Naive thymus-derived CD4-positive, alpha-beta T cell (primary cell): ENCODE measurements at regions of chr2 and their contacts with region 1.

Region 1: GRCh38 chr2:218395797-218396687 is 3.6 kb upstream of the CTDSP1 start:
- DNase-seq: peak; percentile 91 to 98 (median 96)
- ATAC-seq: peak; percentile 83
- H3K4me3 ChIP-seq: peak overlapping the region; percentile 71
- H3K4me3 Mint-ChIP-seq: peak overlapping the region; percentile 85 to 99 (median 94)
- H3K27ac ChIP-seq: peak overlapping the region; percentile 86
- H3K27ac Mint-ChIP-seq: peak overlapping the region; percentile 96 to 100 (median 97)
- H3K4me1 ChIP-seq: peaks cover 29 to 31% of the 10 kb centered on the region in 2 donors
- H3K4me1 Mint-ChIP-seq: peaks cover 16 to 41% (median 39%) of the 10 kb centered on the region in 7 donors
- H3K27me3 ChIP-seq: no peaks in the 10 kb centered on the region
- H3K27me3 Mint-ChIP-seq: no peaks in the 10 kb centered on the region

Region 2: GRCh38 chr2:218186355-218186766 is 209.7 kb before region 1 on chr2:
- CTCF ChIA-PET with region 1: no interaction called
- POLR2A ChIA-PET with region 1: no interaction called
- intact Hi-C with region 1: loop called in 1 of 2 experiments (anchors 2 kb)
- DNase-seq: peak; percentile 29 to 79 (median 70)
- ATAC-seq: peak; percentile 97
- H3K4me3 ChIP-seq: no peak overlapping the region
- H3K4me3 Mint-ChIP-seq: no peak overlapping the region
- H3K27ac ChIP-seq: no peak overlapping the region
- H3K27ac Mint-ChIP-seq: peak overlapping the region in 1 of 9 donors; percentile 3
- H3K4me1 ChIP-seq: no peaks in the 10 kb centered on the region
- H3K4me1 Mint-ChIP-seq: peaks cover 0 to 14% (median 8%) of the 10 kb centered on the region in 7 donors
- H3K27me3 ChIP-seq: no peaks in the 10 kb centered on the region
- H3K27me3 Mint-ChIP-seq: peaks cover 0 to 24% (median 0%) of the 10 kb centered on the region in 5 donors

Region 3: DNA sequence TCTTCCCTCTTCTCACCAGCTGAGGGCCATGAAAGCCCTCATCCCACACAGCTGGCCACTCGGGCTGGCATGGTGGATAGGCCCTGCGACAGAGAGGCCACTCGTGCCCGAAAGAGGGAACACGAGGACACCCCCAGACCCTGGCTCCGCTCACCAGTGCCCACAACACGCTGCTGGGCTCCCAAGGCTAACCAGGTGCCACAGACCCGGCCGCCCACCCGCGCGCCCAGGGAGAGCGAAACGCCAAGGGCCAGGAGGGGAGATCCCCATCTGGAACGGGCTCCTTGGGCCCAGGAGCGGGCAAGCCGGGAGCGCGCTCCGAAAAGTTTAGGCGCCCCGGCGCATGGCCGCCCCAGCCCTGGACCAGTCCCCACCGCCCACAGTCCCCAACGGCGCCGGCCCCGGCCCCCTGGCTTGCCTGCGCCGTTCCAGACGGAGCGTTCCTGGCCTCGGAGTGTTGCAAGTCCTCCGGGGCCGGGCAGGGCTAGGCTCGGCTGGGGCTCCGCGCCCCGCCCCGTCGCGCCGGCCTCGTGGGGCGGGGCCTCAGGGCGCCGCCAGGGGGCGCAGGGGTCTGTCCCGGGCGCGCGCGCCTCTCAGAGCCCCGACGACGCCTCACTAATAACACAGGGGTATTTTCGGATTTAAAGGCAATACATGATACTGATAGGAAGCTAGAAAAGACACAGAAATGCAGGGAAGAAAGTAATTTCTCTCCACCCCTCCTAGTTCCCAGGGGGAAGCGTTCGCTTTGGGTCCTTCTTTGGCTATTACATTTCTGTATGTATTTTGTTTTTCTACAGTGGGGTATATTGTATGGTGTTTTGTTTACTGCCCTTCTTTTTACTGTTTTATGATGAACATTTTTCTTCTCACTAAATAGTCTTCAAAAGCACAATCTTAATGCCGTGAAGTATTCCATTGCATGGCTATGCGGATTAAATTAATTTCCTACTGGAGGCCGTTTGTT is 103.7 kb before region 1 on chr2 and contains the start of gene TMBIM1:
- CTCF ChIA-PET with region 1: interaction called, 17 read pairs
- POLR2A ChIA-PET with region 1: interaction called, 34 read pairs
- intact Hi-C with region 1: loop called (anchors 1 kb)
- DNase-seq: peak; percentile 72 to 90 (median 83)
- ATAC-seq: peak; percentile 96
- H3K4me3 ChIP-seq: peak within 1 kb of the TSS; percentile 53
- H3K4me3 Mint-ChIP-seq: peak within 1 kb of the TSS; percentile 82 to 96 (median 92)
- H3K27ac ChIP-seq: peak within 1 kb of the TSS; percentile 93
- H3K27ac Mint-ChIP-seq: peak within 1 kb of the TSS; percentile 88 to 99 (median 98)
- H3K4me1 ChIP-seq: peaks cover 42 to 47% of the 10 kb centered on the region in 2 donors
- H3K4me1 Mint-ChIP-seq: peaks cover 32 to 61% (median 53%) of the 10 kb centered on the region in 7 donors
- H3K27me3 ChIP-seq: no peaks in the 10 kb centered on the region
- H3K27me3 Mint-ChIP-seq: peaks cover 0 to 2% (median 0%) of the 10 kb centered on the region in 5 donors
- total RNA-seq, gene TMBIM1: 51.7 to 112 (median 83.8) TPM

Region 4: GRCh38 chr2:218367415-218368153 is 28.5 kb before region 1 on chr2:
- CTCF ChIA-PET with region 1: interaction called, 4 read pairs
- POLR2A ChIA-PET with region 1: interaction called, 14 read pairs
- intact Hi-C with region 1: loop called (anchors 1 to 2 kb)
- DNase-seq: peak; percentile 55 to 79 (median 62)
- ATAC-seq: peak; percentile 89
- H3K4me3 ChIP-seq: peak overlapping the region; percentile 74
- H3K4me3 Mint-ChIP-seq: peak overlapping the region; percentile 75 to 87 (median 82)
- H3K27ac ChIP-seq: peak overlapping the region; percentile 72
- H3K27ac Mint-ChIP-seq: peak overlapping the region; percentile 14 to 94 (median 89)
- H3K4me1 ChIP-seq: peaks cover 0 to 17% of the 10 kb centered on the region in 2 donors
- H3K4me1 Mint-ChIP-seq: peaks cover 11 to 51% (median 31%) of the 10 kb centered on the region in 7 donors
- H3K27me3 ChIP-seq: no peaks in the 10 kb centered on the region
- H3K27me3 Mint-ChIP-seq: peaks cover 0 to 33% (median 0%) of the 10 kb centered on the region in 5 donors

Region 5: GRCh38 chr2:218648088-218648786 is 252.2 kb after region 1 on chr2:
- CTCF ChIA-PET with region 1: no interaction called
- POLR2A ChIA-PET with region 1: no interaction called
- intact Hi-C with region 1: loop called (anchors 2 kb)
- DNase-seq: peak; percentile 15 to 55 (median 46)
- ATAC-seq: peak; percentile 91
- H3K4me3 ChIP-seq: no peak overlapping the region
- H3K4me3 Mint-ChIP-seq: peak overlapping the region in 1 of 10 donors; percentile 7
- H3K27ac ChIP-seq: no peak overlapping the region
- H3K27ac Mint-ChIP-seq: peak overlapping the region in 1 of 9 donors; percentile 35
- H3K4me1 ChIP-seq: peaks cover 0 to 7% of the 10 kb centered on the region in 2 donors
- H3K4me1 Mint-ChIP-seq: peaks cover 0 to 14% (median 12%) of the 10 kb centered on the region in 7 donors
- H3K27me3 ChIP-seq: no peaks in the 10 kb centered on the region
- H3K27me3 Mint-ChIP-seq: no peaks in the 10 kb centered on the region

Region 6: DNA sequence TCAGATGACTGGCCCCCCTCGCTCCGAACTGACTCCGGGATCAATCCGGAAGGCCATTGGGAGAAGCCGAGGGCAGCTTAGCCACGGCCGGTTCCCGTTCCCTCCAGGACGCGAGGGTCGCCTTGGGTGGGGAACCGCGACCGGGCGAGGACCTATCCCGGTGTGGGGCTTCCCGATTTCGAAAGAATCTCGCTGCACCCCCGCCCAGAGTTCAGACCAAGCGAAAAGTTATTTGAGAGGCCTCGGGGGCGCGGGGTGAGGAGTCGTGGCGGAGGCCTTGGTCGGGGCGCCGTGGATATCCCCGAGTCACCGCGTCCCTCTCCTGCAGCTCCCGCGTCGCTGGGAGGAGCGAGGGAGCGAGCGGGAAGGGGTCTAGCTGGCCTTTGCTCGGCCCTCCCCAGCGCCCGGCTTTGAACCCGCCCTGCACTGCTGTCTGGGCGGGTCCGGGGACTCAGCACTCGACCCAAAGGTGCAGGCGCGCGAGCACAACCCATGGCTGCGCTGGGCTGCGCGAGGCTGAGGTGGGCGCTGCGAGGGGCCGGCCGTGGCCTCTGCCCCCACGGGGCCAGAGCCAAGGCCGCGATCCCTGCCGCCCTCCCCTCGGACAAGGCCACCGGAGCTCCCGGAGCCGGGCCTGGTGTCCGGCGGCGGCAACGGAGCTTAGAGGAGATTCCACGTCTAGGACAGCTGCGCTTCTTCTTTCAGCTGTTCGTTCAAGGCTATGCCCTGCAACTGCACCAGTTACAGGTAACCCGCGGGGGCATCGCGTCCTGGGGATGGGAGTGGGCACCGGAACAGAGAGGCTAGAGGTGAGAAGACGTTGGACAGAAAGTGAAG is 385.9 kb after region 1 on chr2 and contains the start of gene CYP27A1:
- CTCF ChIA-PET with region 1: no interaction called
- POLR2A ChIA-PET with region 1: no interaction called
- intact Hi-C with region 1: no loop called
- DNase-seq: peak in 1 of 9 donors; percentile 23
- ATAC-seq: peak; percentile 29
- H3K4me3 ChIP-seq: no peak within 1 kb of the TSS
- H3K4me3 Mint-ChIP-seq: peak within 1 kb of the TSS in 6 of 10 donors; percentile 22 to 52 (median 27)
- H3K27ac ChIP-seq: no peak within 1 kb of the TSS
- H3K27ac Mint-ChIP-seq: no peak within 1 kb of the TSS
- H3K4me1 ChIP-seq: peaks cover 0 to 3% of the 10 kb centered on the region in 2 donors
- H3K4me1 Mint-ChIP-seq: peaks cover 0 to 14% (median 4%) of the 10 kb centered on the region in 7 donors
- H3K27me3 ChIP-seq: peaks cover 0 to 3% of the 10 kb centered on the region in 2 donors
- H3K27me3 Mint-ChIP-seq: peaks cover 53 to 73% (median 63%) of the 10 kb centered on the region in 5 donors
- total RNA-seq, gene CYP27A1: 0.19 to 10.6 (median 3.9) TPM

Region 7: GRCh38 chr2:218892693-218893348 is 496.8 kb after region 1 on chr2:
- CTCF ChIA-PET with region 1: no interaction called
- POLR2A ChIA-PET with region 1: no interaction called
- intact Hi-C with region 1: loop called (anchors 2 kb)
- DNase-seq: peak; percentile 82 to 93 (median 91)
- ATAC-seq: peak; percentile 78
- H3K4me3 ChIP-seq: peak overlapping the region; percentile 48
- H3K4me3 Mint-ChIP-seq: peak overlapping the region; percentile 58 to 85 (median 75)
- H3K27ac ChIP-seq: peak overlapping the region; percentile 89
- H3K27ac Mint-ChIP-seq: peak overlapping the region; percentile 59 to 96 (median 89)
- H3K4me1 ChIP-seq: peaks cover 53 to 54% of the 10 kb centered on the region in 2 donors
- H3K4me1 Mint-ChIP-seq: peaks cover 38 to 56% (median 52%) of the 10 kb centered on the region in 7 donors
- H3K27me3 ChIP-seq: no peaks in the 10 kb centered on the region
- H3K27me3 Mint-ChIP-seq: peaks cover 0 to 76% (median 0%) of the 10 kb centered on the region in 5 donors

Region 8: DNA sequence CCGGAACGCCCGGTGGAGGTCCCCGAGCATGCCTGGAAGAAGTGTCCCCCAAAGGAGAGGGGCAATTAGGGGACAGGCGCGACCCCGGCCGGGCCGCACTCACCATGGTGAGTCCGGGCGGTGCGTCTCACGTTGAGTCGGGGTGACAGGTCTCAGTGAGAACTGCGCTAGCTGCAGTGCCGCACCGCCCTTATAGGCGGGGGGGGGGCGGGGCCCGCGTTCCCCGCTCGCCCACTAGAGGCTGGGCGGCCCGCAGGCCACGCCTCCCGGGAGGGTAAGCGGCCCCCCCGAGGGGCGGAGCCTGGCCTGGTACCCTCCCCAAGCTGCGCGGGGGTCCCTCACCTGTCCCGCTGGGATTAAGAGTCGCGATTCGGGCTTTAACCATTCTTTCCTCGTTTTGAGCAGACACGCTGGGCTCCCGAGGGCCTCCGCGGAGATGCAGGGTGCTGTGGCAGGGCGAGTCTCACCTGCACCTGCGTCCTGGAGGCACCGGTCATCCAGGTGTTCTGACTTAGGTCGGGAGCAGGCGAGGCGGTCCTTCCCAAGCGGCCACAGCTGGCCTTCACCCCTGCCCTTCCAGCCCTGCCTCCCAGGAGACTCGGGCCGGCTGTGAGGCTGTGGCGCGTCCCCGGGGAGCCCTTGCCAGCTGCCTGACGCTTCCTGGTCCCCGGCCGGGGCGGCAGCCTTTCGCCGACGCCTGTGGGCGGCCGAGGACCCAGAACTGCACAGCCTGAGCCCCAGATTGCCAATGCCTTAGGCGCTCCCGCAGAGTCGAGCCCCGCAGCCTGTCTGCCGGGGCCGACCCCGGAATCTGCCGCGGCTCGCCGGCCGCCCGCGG is 857.9 kb after region 1 on chr2 and contains the start of gene TUBA4A:
- CTCF ChIA-PET with region 1: no interaction called
- POLR2A ChIA-PET with region 1: no interaction called
- intact Hi-C with region 1: loop called (anchors 5 kb)
- DNase-seq: peak; percentile 84 to 94 (median 91)
- ATAC-seq: peak; percentile 92
- H3K4me3 ChIP-seq: peak within 1 kb of the TSS; percentile 79
- H3K4me3 Mint-ChIP-seq: peak within 1 kb of the TSS; percentile 82 to 100 (median 92)
- H3K27ac ChIP-seq: peak within 1 kb of the TSS; percentile 95
- H3K27ac Mint-ChIP-seq: peak within 1 kb of the TSS; percentile 88 to 99 (median 96)
- H3K4me1 ChIP-seq: peaks cover 31 to 38% of the 10 kb centered on the region in 2 donors
- H3K4me1 Mint-ChIP-seq: peaks cover 28 to 54% (median 47%) of the 10 kb centered on the region in 7 donors
- H3K27me3 ChIP-seq: no peaks in the 10 kb centered on the region
- H3K27me3 Mint-ChIP-seq: peaks cover 0 to 3% (median 0%) of the 10 kb centered on the region in 5 donors
- total RNA-seq, gene TUBA4A: 82.9 to 260 (median 183) TPM